ENCODE measurements at regions of chr11 and their contacts with region 1.

Region 1: DNA sequence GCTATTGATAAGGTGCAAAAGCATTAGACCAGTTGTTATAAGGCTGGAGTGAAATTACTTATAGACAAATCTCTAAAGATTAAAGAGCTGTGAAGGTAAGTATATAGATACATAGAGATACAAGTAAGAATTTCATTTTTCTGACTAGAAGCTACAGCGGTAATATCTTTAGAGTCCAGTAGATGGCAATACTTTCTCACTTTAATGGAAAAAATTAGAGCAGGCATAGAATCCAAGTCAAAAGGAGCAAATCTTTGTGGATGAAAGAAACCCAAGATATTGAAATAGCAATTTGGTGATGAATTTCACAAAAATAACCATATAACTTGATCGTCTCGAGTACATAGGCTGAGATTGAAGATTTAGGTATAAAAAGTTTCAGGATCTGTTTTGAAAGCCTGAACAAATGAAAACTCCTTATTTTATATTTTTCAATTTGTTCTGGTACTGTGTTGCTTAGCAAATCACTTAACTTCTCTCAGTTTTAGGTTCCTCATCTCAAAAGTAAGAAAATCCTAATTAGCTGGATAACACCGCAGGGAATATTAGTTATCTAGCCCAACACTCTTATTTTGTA is 81.9 kb downstream of the UVRAG start:
- DNase-seq: peak in 1 of 2 donors; percentile 68
- H3K4me3 ChIP-seq: no peak overlapping the region
- H3K27ac ChIP-seq: no peak overlapping the region
- H3K4me1 ChIP-seq: peaks cover 3 to 42% (median 18%) of the 10 kb centered on the region in 4 donors
- H3K27me3 ChIP-seq: no peaks in the 10 kb centered on the region
- CTCF ChIP-seq: peak in 4 of 7 experiments; percentile 68 to 71 (median 68)
- EP300 ChIP-seq: no peak
- POLR2A ChIP-seq: no peak

Region 2: DNA sequence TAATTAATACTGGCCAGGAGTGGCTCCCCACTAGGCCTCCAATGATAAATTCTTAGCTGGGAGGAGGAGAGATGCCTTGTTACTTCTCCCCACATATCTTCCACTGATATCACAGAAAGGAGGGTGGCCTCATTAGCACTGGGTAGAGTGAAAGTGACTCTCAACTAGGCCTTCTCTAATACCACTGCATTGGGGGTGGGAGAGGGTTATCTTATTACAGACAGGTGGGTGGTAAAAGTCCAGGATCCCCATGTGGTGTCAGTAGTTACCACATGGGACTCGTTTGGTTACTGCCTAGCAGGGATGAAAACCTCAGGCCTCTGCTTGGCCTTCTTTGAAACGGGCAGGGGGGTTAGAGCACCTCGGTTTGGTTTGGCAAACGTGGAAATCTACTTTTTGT is 85.4 kb after region 1 on chr11:
- intact Hi-C with region 1: no loop called
- DNase-seq: no peak
- H3K4me3 ChIP-seq: no peak overlapping the region
- H3K27ac ChIP-seq: no peak overlapping the region
- H3K4me1 ChIP-seq: peaks cover 0 to 8% (median 0%) of the 10 kb centered on the region in 4 donors
- H3K27me3 ChIP-seq: no peaks in the 10 kb centered on the region
- CTCF ChIP-seq: no peak
- EP300 ChIP-seq: no peak
- POLR2A ChIP-seq: no peak

Region 3: GRCh38 chr11:76152086-76152681 is 255.3 kb after region 1 on chr11:
- intact Hi-C with region 1: loop called (anchors 2 kb)
- DNase-seq: peak; percentile 90 to 93
- H3K4me3 ChIP-seq: peak overlapping the region; percentile 39 to 45 (median 42)
- H3K27ac ChIP-seq: no peak overlapping the region
- H3K4me1 ChIP-seq: peaks cover 7 to 16% (median 12%) of the 10 kb centered on the region in 4 donors
- H3K27me3 ChIP-seq: peaks cover 0 to 5% (median 4%) of the 10 kb centered on the region in 3 donors
- CTCF ChIP-seq: peak in 5 of 7 experiments; percentile 89 to 97 (median 93)
- EP300 ChIP-seq: no peak
- POLR2A ChIP-seq: no peak

Region 4: GRCh38 chr11:76318744-76319384 is 421.9 kb after region 1 on chr11:
- intact Hi-C with region 1: loop called (anchors 10 kb)
- DNase-seq: peak; percentile 90 to 93
- H3K4me3 ChIP-seq: no peak overlapping the region
- H3K27ac ChIP-seq: no peak overlapping the region
- H3K4me1 ChIP-seq: peaks cover 8 to 11% (median 10%) of the 10 kb centered on the region in 4 donors
- H3K27me3 ChIP-seq: peaks cover 0 to 48% (median 20%) of the 10 kb centered on the region in 3 donors
- CTCF ChIP-seq: peak in 5 of 7 experiments; percentile 82 to 93 (median 90)
- EP300 ChIP-seq: no peak
- POLR2A ChIP-seq: no peak

Region 5: DNA sequence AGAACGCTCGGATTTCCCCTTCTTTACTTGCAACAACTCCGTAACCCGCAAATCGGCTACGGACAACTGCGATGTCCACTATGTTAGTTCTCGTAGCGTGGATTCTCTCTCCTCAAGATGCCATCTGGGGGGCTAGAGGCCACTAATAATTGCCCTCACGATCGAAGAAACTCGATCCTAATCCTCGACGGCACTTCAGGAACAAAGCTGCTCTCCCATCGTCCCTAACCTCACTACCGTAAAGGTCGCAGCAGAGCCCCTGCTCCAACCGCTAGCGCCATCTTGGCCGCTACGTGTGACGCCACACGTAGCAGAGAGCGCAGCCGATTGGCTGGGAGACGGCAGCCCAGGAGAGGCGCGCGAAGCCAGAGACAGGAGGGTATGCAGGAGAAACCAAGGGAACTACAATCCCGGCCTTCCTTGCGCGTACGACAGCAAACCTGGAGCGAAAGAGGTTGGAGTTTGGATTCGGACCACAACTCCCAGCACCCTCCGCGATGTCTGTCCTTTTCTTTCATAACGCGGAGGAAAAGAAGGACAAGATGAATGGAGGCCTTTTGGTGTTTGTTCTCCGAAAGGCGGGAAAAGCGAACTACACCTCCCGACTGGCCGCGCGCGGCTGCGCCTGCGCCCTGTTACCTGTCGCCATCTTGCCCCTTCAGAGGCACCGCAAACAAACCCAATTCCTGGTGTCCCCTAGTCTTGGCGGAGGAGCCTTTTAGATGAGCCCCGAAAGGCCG is 547.6 kb after region 1 on chr11 and contains the start of gene EMSY:
- intact Hi-C with region 1: no loop called
- DNase-seq: peak; percentile 96 to 100
- H3K4me3 ChIP-seq: peak within 1 kb of the TSS; percentile 88 to 98 (median 96)
- H3K27ac ChIP-seq: peak within 1 kb of the TSS; percentile 84 to 93 (median 91)
- H3K4me1 ChIP-seq: peaks cover 9 to 29% (median 25%) of the 10 kb centered on the region in 4 donors
- H3K27me3 ChIP-seq: no peaks in the 10 kb centered on the region
- CTCF ChIP-seq: peak in 1 of 7 experiments; percentile 14
- EP300 ChIP-seq: no peak
- POLR2A ChIP-seq: peak in 2 of 4 donors; percentile 91 to 98
- total RNA-seq, gene EMSY: 10.1 to 185 (median 32.2) TPM